Activated B cell treated with CpG ODN at 0.5 μM for 24 hours (primary cell): ENCODE measurements at regions of chr1 and their contacts with region 1.

Region 1: GRCh38 chr1:85027242-85027983 is 20.9 kb downstream of the MCOLN3 start:
- DNase-seq: no peak
- ATAC-seq: peak; percentile 98
- H3K4me3 Mint-ChIP-seq: peak overlapping the region; percentile 69
- H3K27ac Mint-ChIP-seq: peak overlapping the region; percentile 85
- H3K4me1 Mint-ChIP-seq: peaks cover 8% of the 10 kb centered on the region
- H3K27me3 Mint-ChIP-seq: no peaks in the 10 kb centered on the region
- CTCF ChIP-seq: no peak

Region 2: GRCh38 chr1:83776913-83777757 is 1250.3 kb before region 1 on chr1:
- CTCF ChIA-PET with region 1: no interaction called
- POLR2A ChIA-PET with region 1: no interaction called
- intact Hi-C with region 1: no loop called
- DNase-seq: no peak
- ATAC-seq: no peak
- H3K4me3 Mint-ChIP-seq: no peak overlapping the region
- H3K27ac Mint-ChIP-seq: no peak overlapping the region
- H3K4me1 Mint-ChIP-seq: peaks cover 2% of the 10 kb centered on the region
- H3K27me3 Mint-ChIP-seq: peaks cover 2% of the 10 kb centered on the region
- CTCF ChIP-seq: no peak

Region 3: DNA sequence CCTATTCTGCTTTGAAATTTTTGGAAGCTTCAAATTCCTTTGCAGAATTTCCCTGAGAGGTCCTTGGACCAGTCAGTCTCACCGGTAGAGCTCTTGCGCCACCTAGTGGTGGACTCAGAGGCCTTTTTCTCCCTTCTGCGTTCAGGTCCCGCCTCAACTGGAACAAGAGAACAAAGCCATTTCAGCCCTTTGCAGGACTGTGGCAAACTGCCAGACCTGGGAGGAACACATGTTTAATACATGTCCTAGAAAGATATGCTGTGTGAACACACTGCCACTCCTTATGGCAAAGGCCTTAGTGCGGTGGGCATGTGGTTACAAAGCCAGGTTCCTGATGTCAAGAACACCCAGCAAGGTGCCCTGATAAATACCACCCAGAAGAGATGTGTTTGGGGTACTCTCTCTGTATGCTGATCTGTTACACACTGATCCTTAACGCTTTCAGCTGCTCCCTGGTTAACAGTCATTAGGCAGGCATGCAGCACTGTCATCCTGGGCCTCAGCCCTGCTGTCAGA is 254.9 kb before region 1 on chr1:
- CTCF ChIA-PET with region 1: no interaction called
- POLR2A ChIA-PET with region 1: no interaction called
- intact Hi-C with region 1: loop called (anchors 10 kb)
- DNase-seq: peak; percentile 58
- ATAC-seq: peak; percentile 71
- H3K4me3 Mint-ChIP-seq: no peak overlapping the region
- H3K27ac Mint-ChIP-seq: no peak overlapping the region
- H3K4me1 Mint-ChIP-seq: no peaks in the 10 kb centered on the region
- H3K27me3 Mint-ChIP-seq: peaks cover 5% of the 10 kb centered on the region
- CTCF ChIP-seq: peak; percentile 43

Region 4: GRCh38 chr1:84936116-84936810 is 91.2 kb before region 1 on chr1:
- CTCF ChIA-PET with region 1: interaction called, 366 read pairs
- POLR2A ChIA-PET with region 1: no interaction called
- intact Hi-C with region 1: no loop called
- DNase-seq: no peak
- ATAC-seq: peak; percentile 70
- H3K4me3 Mint-ChIP-seq: no peak overlapping the region
- H3K27ac Mint-ChIP-seq: no peak overlapping the region
- H3K4me1 Mint-ChIP-seq: peaks cover 4% of the 10 kb centered on the region
- H3K27me3 Mint-ChIP-seq: no peaks in the 10 kb centered on the region
- CTCF ChIP-seq: peak; percentile 99

Region 5: DNA sequence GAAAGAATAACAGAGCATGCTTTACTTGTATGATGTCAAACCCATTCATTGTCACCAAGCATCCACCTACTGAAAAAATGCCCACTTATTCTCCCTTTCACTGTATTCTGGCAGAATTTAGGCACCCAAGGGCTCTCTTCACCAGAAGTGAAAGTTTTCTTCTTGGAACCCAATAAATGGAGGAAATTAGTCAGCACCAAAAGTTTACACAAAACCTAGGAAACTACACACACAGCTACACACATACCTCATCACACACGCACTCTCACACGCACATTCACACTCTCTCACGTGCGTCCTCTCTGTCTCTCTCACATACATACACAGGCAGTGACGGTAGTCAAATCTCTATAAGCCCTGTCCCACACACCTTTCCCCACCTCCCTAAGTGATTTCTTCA is 68.1 kb before region 1 on chr1:
- CTCF ChIA-PET with region 1: interaction called, 14 read pairs
- POLR2A ChIA-PET with region 1: no interaction called
- intact Hi-C with region 1: no loop called
- DNase-seq: no peak
- ATAC-seq: peak; percentile 42
- H3K4me3 Mint-ChIP-seq: no peak overlapping the region
- H3K27ac Mint-ChIP-seq: peak overlapping the region; percentile 9
- H3K4me1 Mint-ChIP-seq: peaks cover 4% of the 10 kb centered on the region
- H3K27me3 Mint-ChIP-seq: no peaks in the 10 kb centered on the region
- CTCF ChIP-seq: no peak

Region 6: DNA sequence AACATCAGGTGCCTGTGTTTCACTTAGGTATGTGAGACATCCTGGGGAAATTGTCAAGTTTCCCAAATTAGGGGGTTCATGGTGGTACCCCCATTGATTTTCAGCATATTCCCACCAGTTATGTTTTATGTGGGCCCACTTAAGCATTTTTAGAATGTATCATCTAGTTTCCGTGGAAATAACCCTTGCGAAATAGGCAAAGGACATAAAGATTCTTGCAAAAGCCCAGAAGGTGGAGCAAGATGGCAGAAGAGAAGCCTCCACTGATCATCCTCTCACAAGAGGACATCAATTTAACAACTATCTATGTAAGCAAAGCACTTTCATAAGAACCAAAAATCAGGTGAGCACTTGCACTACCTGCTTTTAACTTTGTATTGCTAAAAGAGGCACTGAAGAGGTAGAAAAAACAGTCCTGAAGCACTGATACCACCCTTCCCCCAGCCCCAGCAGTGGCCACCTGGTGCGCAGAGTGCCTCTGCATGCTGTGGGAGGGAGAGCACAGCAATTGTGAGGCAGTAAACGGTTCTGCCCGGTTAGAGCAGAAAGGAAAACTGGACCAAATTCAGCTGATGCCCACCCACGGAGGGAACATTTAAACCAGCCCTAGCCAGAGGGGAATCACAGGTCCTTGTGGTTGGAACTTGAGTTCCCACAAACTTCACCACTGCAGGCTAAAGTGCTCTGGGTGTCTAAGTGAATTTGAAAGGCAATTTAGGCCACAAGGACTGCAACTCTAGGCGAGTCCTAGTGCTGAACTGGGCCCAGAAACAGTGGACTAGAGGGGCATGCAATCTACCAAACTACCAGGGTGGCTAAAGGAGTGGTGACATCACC is 53.7 kb before region 1 on chr1:
- CTCF ChIA-PET with region 1: interaction called, 13 read pairs
- POLR2A ChIA-PET with region 1: no interaction called
- intact Hi-C with region 1: loop called (anchors 1 kb)
- DNase-seq: no peak
- ATAC-seq: peak; percentile 29
- H3K4me3 Mint-ChIP-seq: no peak overlapping the region
- H3K27ac Mint-ChIP-seq: peak overlapping the region; percentile 46
- H3K4me1 Mint-ChIP-seq: peaks cover 69% of the 10 kb centered on the region
- H3K27me3 Mint-ChIP-seq: no peaks in the 10 kb centered on the region
- CTCF ChIP-seq: no peak

Region 7: GRCh38 chr1:84996846-84997666 is 30.4 kb before region 1 on chr1 and contains the start of gene MCOLN2:
- CTCF ChIA-PET with region 1: interaction called, 11 read pairs
- POLR2A ChIA-PET with region 1: interaction called, 6 read pairs
- intact Hi-C with region 1: loop called (anchors 1 kb)
- DNase-seq: peak; percentile 60
- ATAC-seq: peak; percentile 67
- H3K4me3 Mint-ChIP-seq: peak within 1 kb of the TSS; percentile 85
- H3K27ac Mint-ChIP-seq: peak within 1 kb of the TSS; percentile 87
- H3K4me1 Mint-ChIP-seq: peaks cover 63% of the 10 kb centered on the region
- H3K27me3 Mint-ChIP-seq: peaks cover 2% of the 10 kb centered on the region
- CTCF ChIP-seq: no peak
- total RNA-seq, gene MCOLN2: 60.1 and 80.2 TPM in 2 replicates

Region 8: GRCh38 chr1:85259118-85259911 is 231.9 kb after region 1 on chr1 and contains the start of gene C1orf52:
- CTCF ChIA-PET with region 1: interaction called, 17 read pairs
- POLR2A ChIA-PET with region 1: no interaction called
- intact Hi-C with region 1: loop called (anchors 1 kb)
- DNase-seq: peak; percentile 99
- ATAC-seq: peak; percentile 96
- H3K4me3 Mint-ChIP-seq: peak within 1 kb of the TSS; percentile 98
- H3K27ac Mint-ChIP-seq: peak within 1 kb of the TSS; percentile 92
- H3K4me1 Mint-ChIP-seq: peaks cover 37% of the 10 kb centered on the region
- H3K27me3 Mint-ChIP-seq: no peaks in the 10 kb centered on the region
- CTCF ChIP-seq: peak; percentile 88
- total RNA-seq, gene C1orf52: 31.4 and 32.0 TPM in 2 replicates

Region 9: GRCh38 chr1:85283475-85284199 is 256.2 kb after region 1 on chr1:
- CTCF ChIA-PET with region 1: no interaction called
- POLR2A ChIA-PET with region 1: no interaction called
- intact Hi-C with region 1: no loop called
- DNase-seq: no peak
- ATAC-seq: no peak
- H3K4me3 Mint-ChIP-seq: no peak overlapping the region
- H3K27ac Mint-ChIP-seq: no peak overlapping the region
- H3K4me1 Mint-ChIP-seq: peaks cover 11% of the 10 kb centered on the region
- H3K27me3 Mint-ChIP-seq: no peaks in the 10 kb centered on the region
- CTCF ChIP-seq: no peak

Region 10: GRCh38 chr1:85554630-85555327 is 527.4 kb after region 1 on chr1:
- CTCF ChIA-PET with region 1: no interaction called
- POLR2A ChIA-PET with region 1: no interaction called
- intact Hi-C with region 1: no loop called
- DNase-seq: no peak
- ATAC-seq: no peak
- H3K4me3 Mint-ChIP-seq: no peak overlapping the region
- H3K27ac Mint-ChIP-seq: no peak overlapping the region
- H3K4me1 Mint-ChIP-seq: no peaks in the 10 kb centered on the region
- H3K27me3 Mint-ChIP-seq: peaks cover 4% of the 10 kb centered on the region
- CTCF ChIP-seq: no peak